HAP-1 (cell line): ENCODE measurements at regions of chr17 and their contacts with region 1.

Region 1: GRCh38 chr17:72151565-72152391 is 31.0 kb downstream of the SOX9 start:
- DNase-seq: no peak
- H3K4me3 ChIP-seq: no peak overlapping the region
- H3K4me1 ChIP-seq: no peaks in the 10 kb centered on the region
- H3K27me3 ChIP-seq: no peaks in the 10 kb centered on the region

Region 2: GRCh38 chr17:72270273-72270950 is 118.6 kb after region 1 on chr17:
- in situ Hi-C with region 1: loop called (anchors 25 kb)
- DNase-seq: no peak
- H3K4me3 ChIP-seq: no peak overlapping the region
- H3K4me1 ChIP-seq: no peaks in the 10 kb centered on the region
- H3K27me3 ChIP-seq: no peaks in the 10 kb centered on the region